H1 (cell line): ENCODE measurements at regions of chr6 and their contacts with region 1.

Region 1: DNA sequence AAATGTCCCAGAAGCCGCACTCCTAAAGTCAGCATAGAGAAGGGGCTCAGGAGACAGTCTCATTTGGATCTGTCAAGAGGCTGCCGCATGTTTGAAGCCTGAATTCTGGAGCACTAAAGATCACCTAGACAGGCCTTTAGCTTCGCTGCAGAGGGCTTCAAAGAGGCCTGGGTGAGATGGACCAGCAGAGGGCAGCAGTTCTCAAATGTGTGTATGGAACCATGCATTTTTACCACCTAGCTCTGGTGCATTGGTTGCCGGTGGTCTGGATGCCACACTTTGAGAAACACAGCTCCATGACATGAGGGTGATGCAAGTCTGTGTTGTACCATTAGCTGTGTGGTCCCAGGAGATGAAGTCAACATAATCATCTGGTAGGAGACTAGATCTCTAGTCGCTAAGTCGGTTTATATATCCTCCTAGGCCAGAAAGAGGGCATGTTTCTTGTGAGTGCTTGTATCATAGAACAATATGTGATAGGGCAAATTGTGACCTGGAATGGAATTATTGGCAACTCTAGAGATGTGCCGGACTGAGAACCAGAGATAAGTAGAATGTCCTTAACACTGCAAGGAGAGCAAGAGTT is 64.8 kb downstream of the KIAA0319 start:
- DNase-seq: peak; percentile 54 to 88
- H3K4me3 ChIP-seq: no peak overlapping the region
- H3K27ac ChIP-seq: no peak overlapping the region
- H3K4me1 ChIP-seq: peaks cover 0 to 2% (median 0%) of the 10 kb centered on the region in 4 experiments; a peak in 1 of 7 replicates
- H3K27me3 ChIP-seq: no peaks in the 10 kb centered on the region
- CTCF ChIP-seq: peak; percentile 68 to 91 (median 86)
- EP300 ChIP-seq: no peak
- POLR2A ChIP-seq: no peak
- RAD21 ChIP-seq: peak; percentile 80 to 88

Region 2: GRCh38 chr6:24494821-24495795 is 86.1 kb before region 1 on chr6 and contains the start of gene ALDH5A1:
- CTCF ChIA-PET with region 1: interaction called, 19 read pairs
- POLR2A ChIA-PET with region 1: no interaction called
- DNase-seq: peak; percentile 39 to 84
- H3K4me3 ChIP-seq: peak within 1 kb of the TSS; percentile 48 to 72 (median 66)
- H3K27ac ChIP-seq: no peak within 1 kb of the TSS
- H3K4me1 ChIP-seq: peaks cover 0 to 7% (median 3%) of the 10 kb centered on the region in 4 experiments; a peak in 4 of 7 replicates
- H3K27me3 ChIP-seq: peaks cover 0 to 24% (median 8%) of the 10 kb centered on the region in 4 experiments; a peak in 6 of 7 replicates
- CTCF ChIP-seq: peak; percentile 35 to 40 (median 36)
- EP300 ChIP-seq: no peak
- POLR2A ChIP-seq: peak in 1 of 2 experiments; percentile 12; a peak in 1 of 3 replicates
- RAD21 ChIP-seq: peak; percentile 50 to 65
- total RNA-seq, gene ALDH5A1: 2.4 and 4.1 TPM in 2 replicates

Region 3: DNA sequence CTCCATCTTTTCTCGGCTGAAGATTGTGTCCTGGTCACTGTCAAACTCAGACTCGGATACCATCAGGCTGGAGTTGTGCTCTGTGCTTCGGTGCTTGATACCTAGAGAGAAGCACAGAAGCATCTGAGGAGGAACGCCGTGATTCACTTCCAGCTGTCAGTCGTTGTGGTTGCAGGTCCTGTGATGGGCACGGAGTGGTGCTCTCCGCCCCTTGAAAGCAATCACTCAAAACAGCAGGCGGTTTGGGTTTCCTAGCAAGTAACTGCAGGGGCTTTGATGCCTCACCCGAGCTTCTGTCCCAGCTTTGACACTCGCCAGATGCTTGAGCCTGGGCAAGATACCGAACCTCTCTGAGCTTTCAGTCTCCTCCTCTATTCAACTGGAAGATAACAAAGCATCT is 33.9 kb before region 1 on chr6:
- CTCF ChIA-PET with region 1: interaction called, 13 read pairs
- POLR2A ChIA-PET with region 1: no interaction called
- DNase-seq: peak; percentile 31 to 54
- H3K4me3 ChIP-seq: no peak overlapping the region
- H3K27ac ChIP-seq: no peak overlapping the region
- H3K4me1 ChIP-seq: no peaks in the 10 kb centered on the region
- H3K27me3 ChIP-seq: no peaks in the 10 kb centered on the region
- CTCF ChIP-seq: peak; percentile 39 to 50 (median 46); a peak in 3 of 4 replicates
- EP300 ChIP-seq: no peak
- POLR2A ChIP-seq: no peak
- RAD21 ChIP-seq: peak; percentile 62 to 73

Region 4: DNA sequence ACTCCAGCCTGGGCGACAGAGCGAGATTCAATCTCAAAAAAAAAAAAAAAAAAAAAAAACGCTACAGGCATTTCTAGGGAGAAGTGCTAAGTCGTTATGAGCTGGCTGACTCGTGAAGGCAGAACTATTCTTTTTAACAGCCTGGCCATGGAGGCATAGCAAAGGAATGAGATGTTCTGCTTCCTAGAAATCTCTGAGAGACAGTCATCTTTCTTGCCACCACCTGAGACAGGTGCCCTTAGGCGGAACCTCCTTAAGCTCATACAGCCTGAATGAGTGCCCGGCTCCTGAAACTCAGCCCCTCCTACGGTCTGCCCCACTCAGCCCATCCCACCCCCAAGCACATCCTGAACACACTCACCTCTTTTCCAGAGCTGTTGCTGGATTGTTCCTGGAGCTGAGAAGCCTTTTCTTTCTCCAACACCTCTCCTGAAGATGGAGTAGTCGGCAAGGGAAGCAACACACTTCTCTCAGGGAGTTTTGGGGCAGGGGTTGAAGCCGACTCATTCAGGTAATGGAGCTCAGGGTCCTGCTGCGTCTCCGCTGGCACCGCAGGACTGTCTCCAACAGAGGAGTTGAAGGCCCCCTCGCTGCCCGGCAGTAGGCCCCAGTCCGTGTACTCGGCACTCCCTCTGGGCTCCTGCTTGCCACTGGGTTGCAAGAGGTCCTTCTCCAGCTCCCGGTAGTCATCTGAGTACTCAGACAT is 14.5 kb after region 1 on chr6:
- CTCF ChIA-PET with region 1: interaction called, 21 read pairs
- POLR2A ChIA-PET with region 1: interaction called, 3 read pairs
- DNase-seq: no peak
- H3K4me3 ChIP-seq: no peak overlapping the region
- H3K27ac ChIP-seq: no peak overlapping the region
- H3K4me1 ChIP-seq: no peaks in the 10 kb centered on the region
- H3K27me3 ChIP-seq: no peaks in the 10 kb centered on the region
- CTCF ChIP-seq: no peak
- EP300 ChIP-seq: no peak
- POLR2A ChIP-seq: no peak
- RAD21 ChIP-seq: no peak

Region 5: GRCh38 chr6:24614043-24614420 is 32.9 kb after region 1 on chr6:
- CTCF ChIA-PET with region 1: interaction called, 15 read pairs
- POLR2A ChIA-PET with region 1: interaction called, 3 read pairs
- DNase-seq: no peak
- H3K4me3 ChIP-seq: no peak overlapping the region
- H3K27ac ChIP-seq: no peak overlapping the region
- H3K4me1 ChIP-seq: peaks cover 0 to 2% (median 0%) of the 10 kb centered on the region in 4 experiments; a peak in 2 of 7 replicates
- H3K27me3 ChIP-seq: no peaks in the 10 kb centered on the region
- CTCF ChIP-seq: no peak
- EP300 ChIP-seq: no peak
- POLR2A ChIP-seq: no peak
- RAD21 ChIP-seq: no peak

Region 6: GRCh38 chr6:24666641-24667377 is 85.6 kb after region 1 on chr6 and contains the starts of genes ACOT13 and TDP2:
- CTCF ChIA-PET with region 1: interaction called, 39 read pairs
- POLR2A ChIA-PET with region 1: interaction called, 5 read pairs
- DNase-seq: peak; percentile 93 to 97
- H3K4me3 ChIP-seq: peak within 1 kb of the TSS; percentile 85 to 99 (median 93)
- H3K27ac ChIP-seq: peak within 1 kb of the TSS; percentile 92
- H3K4me1 ChIP-seq: peaks cover 0 to 5% (median 0%) of the 10 kb centered on the region in 4 experiments; a peak in 3 of 7 replicates
- H3K27me3 ChIP-seq: no peaks in the 10 kb centered on the region
- CTCF ChIP-seq: peak; percentile 47 to 63 (median 58)
- EP300 ChIP-seq: peak in 1 of 2 experiments; percentile 57; a peak in 1 of 3 replicates
- POLR2A ChIP-seq: peak; percentile 86 to 94
- RAD21 ChIP-seq: peak; percentile 47 to 63
- total RNA-seq, gene ACOT13: 40.6 and 42.8 TPM in 2 replicates
- total RNA-seq, gene TDP2: 51.6 and 52.6 TPM in 2 replicates

Region 7: GRCh38 chr6:24692848-24693592 is 111.8 kb after region 1 on chr6:
- CTCF ChIA-PET with region 1: interaction called, 23 read pairs
- POLR2A ChIA-PET with region 1: interaction called, 5 read pairs
- DNase-seq: no peak
- H3K4me3 ChIP-seq: no peak overlapping the region
- H3K27ac ChIP-seq: no peak overlapping the region
- H3K4me1 ChIP-seq: no peaks in the 10 kb centered on the region
- H3K27me3 ChIP-seq: no peaks in the 10 kb centered on the region
- CTCF ChIP-seq: no peak
- EP300 ChIP-seq: no peak
- POLR2A ChIP-seq: no peak
- RAD21 ChIP-seq: no peak

Region 8: DNA sequence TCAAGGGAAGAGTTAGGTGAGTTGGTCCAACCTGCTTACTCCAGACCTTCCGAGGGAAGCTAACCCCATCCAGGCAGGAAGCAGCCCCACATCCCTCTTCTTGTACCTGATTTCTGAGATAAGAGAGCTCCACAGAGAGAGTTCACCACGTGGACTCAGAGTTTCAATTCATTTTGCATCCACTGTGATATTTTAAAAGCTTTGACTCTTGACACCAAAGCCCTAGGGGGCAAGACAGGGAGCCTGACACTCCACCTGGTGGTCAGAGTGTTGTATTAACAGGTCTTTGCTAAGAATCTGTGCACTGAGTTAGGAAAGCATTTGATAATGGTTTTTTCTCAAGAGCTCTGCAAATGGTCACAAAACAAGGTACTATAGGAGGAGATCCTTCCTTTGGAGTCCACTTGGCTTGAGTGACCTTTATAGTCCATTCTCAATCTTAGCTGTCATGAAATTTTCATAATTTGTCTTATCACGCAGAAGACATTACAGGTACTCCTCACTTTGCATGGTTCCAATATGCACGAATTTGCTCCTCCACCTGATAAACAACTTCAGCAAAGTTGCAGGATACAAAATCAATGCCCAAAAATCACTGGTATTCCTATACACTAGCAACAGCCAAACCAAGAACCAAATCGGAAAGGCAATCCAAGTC is 410.8 kb after region 1 on chr6:
- CTCF ChIA-PET with region 1: no interaction called
- POLR2A ChIA-PET with region 1: no interaction called
- DNase-seq: no peak
- H3K4me3 ChIP-seq: no peak overlapping the region
- H3K27ac ChIP-seq: no peak overlapping the region
- H3K4me1 ChIP-seq: peaks cover 0 to 7% (median 6%) of the 10 kb centered on the region in 4 experiments; a peak in 5 of 7 replicates
- H3K27me3 ChIP-seq: no peaks in the 10 kb centered on the region
- CTCF ChIP-seq: peak; percentile 38 to 84 (median 77)
- EP300 ChIP-seq: no peak
- POLR2A ChIP-seq: no peak
- RAD21 ChIP-seq: peak; percentile 76 to 89